Head of caudate nucleus (tissue), 42 donors: ENCODE measurements at regions of chr11 and their contacts with region 1.

Region 1: DNA sequence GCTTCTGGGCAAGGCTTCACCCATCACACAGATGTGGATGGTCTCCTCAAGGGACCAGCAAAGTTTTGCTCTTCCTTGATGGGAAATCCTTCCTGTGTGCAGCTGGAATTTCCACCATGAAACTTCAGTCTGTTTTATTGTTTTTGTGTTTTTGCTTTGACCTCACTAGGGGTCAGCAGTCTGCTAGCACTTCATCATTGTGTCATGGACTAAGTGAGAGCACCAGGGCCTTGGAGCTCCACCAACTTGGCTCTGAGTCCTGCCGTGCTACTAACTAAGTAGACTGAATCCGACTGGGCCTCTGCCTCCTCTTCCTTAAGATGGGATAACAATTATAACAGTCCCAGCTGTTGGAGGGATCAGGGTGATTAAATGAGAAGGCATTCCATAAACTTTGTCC is 305.8 kb upstream of the NCAM1 start:
- DNase-seq: peak; percentile 39 to 94 (median 82)

Region 2: DNA sequence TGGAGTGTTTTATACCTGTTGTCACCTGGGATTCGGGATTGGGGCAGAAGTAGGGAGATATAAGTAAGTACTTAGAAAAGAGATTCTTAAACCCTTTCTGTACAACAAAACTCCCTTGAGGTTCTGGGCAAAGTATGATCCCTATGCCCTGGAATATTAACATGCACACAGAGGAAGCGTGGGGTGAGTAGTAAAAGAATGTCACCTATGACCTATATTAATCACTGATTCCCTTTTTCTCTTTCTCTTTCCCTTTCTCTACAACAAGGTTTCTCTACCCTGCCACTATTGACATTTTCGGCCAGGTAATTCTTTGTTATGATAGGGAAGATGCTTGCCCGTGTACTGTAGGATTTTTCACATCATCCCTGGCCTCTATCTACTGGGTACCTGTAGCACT is 185.0 kb before region 1 on chr11:
- intact Hi-C with region 1: no loop called
- DNase-seq: no peak

Region 3: GRCh38 chr11:112734207-112734606 is 78.8 kb after region 1 on chr11:
- intact Hi-C with region 1: loop called (anchors 10 kb)
- DNase-seq: peak in 3 of 42 donors; percentile 36 to 77 (median 41)

Region 4: GRCh38 chr11:113289431-113290187 is 634.2 kb after region 1 on chr11:
- intact Hi-C with region 1: loop called (anchors 10 kb)
- DNase-seq: peak; percentile 52 to 90 (median 75)